ENCODE measurements at regions of chr2 and their contacts with region 1.

Region 1: DNA sequence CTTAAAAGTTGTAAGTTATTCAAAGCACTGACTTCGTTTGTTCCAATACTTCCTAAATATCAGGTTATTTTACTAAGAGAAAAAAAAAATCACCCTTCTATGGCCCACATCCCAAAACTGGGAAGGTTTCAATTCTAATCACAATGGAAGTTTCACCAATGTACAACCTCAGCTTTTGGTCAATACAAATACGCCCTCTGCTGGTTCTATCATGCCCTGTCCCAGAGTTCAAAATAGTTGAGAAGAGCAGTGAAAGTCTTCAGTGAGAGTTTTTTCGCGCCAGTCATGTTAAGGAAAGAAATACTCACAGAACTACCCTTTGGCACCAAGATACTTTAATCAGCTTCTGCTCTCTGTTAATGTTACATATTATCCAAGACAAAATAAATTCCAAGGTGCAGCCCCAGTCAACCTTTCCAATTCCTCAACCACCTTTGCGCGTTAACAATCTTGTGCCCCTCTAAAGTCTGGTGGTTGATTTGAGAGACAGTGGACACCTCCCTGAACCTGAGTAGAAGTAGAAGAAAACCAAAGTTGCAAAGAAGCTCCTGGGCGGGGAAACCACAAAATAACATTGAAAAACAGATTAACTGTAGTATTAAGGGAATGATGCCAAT is 59.9 kb downstream of the SUMO1 start:
- DNase-seq: peak in 13 of 14 experiments; percentile 10 to 73 (median 35)
- ATAC-seq: no peak
- H3K4me3 ChIP-seq: no peak overlapping the region
- H3K4me3 Mint-ChIP-seq: no peak overlapping the region
- H3K27ac ChIP-seq: no peak overlapping the region
- H3K27ac Mint-ChIP-seq: no peak overlapping the region
- H3K4me1 ChIP-seq: no peaks in the 10 kb centered on the region
- H3K4me1 Mint-ChIP-seq: no peaks in the 10 kb centered on the region
- H3K27me3 ChIP-seq: no peaks in the 10 kb centered on the region
- H3K27me3 Mint-ChIP-seq: peaks cover 8% of the 10 kb centered on the region
- CTCF ChIP-seq: peak; percentile 87

Region 2: DNA sequence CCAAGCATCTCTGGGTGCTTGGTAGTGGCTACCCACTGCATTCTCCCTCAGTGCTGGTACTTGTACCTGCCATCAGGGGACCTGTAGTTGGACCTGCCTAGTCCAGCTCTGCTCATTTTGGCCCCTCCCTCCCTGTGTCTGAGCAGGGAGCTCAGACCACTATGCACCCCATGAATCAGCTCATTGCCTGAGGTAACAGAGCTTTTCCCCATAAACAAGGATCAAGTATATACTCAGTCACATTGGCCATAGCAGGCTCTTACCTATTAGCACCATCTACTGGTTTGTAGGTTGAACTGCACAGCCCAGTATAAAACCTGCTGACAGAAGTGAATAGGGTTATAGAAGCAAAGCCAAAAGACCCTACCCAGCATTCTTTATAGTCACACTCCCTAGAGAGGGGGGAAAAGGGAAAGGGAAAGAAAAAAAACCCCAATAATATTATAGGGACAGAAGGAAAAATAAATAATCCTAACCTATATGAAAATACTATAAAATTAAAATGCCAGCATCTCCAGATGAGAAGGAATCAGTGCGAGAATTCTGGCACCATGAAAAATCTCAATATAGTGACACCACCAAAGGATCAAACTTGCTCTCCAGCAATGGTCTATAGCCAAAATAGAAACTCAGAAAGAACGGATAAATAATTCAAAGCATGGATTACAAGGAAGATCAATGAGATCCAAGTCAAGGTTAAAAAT is 814.4 kb before region 1 on chr2:
- CTCF ChIA-PET with region 1: no interaction called
- POLR2A ChIA-PET with region 1: no interaction called
- intact Hi-C with region 1: loop called in 1 of 2 experiments (anchors 2 kb)
- DNase-seq: peak in 7 of 14 experiments; percentile 3 to 75 (median 48)
- ATAC-seq: peak; percentile 97
- H3K4me3 ChIP-seq: no peak overlapping the region
- H3K4me3 Mint-ChIP-seq: no peak overlapping the region
- H3K27ac ChIP-seq: no peak overlapping the region
- H3K27ac Mint-ChIP-seq: peak overlapping the region; percentile 28
- H3K4me1 ChIP-seq: peaks cover 17% of the 10 kb centered on the region
- H3K4me1 Mint-ChIP-seq: peaks cover 36% of the 10 kb centered on the region
- H3K27me3 ChIP-seq: no peaks in the 10 kb centered on the region
- H3K27me3 Mint-ChIP-seq: no peaks in the 10 kb centered on the region
- CTCF ChIP-seq: peak; percentile 95

Region 3: GRCh38 chr2:201680743-201681142 is 497.7 kb before region 1 on chr2:
- CTCF ChIA-PET with region 1: no interaction called
- POLR2A ChIA-PET with region 1: no interaction called
- intact Hi-C with region 1: loop called (anchors 5 kb)
- DNase-seq: peak in 3 of 14 experiments; percentile 12 to 22 (median 18)
- ATAC-seq: no peak
- H3K4me3 ChIP-seq: no peak overlapping the region
- H3K4me3 Mint-ChIP-seq: no peak overlapping the region
- H3K27ac ChIP-seq: no peak overlapping the region
- H3K27ac Mint-ChIP-seq: no peak overlapping the region
- H3K4me1 ChIP-seq: no peaks in the 10 kb centered on the region
- H3K4me1 Mint-ChIP-seq: no peaks in the 10 kb centered on the region
- H3K27me3 ChIP-seq: no peaks in the 10 kb centered on the region
- H3K27me3 Mint-ChIP-seq: peaks cover 15% of the 10 kb centered on the region
- CTCF ChIP-seq: peak; percentile 14

Region 4: GRCh38 chr2:201754717-201755415 is 423.6 kb before region 1 on chr2:
- CTCF ChIA-PET with region 1: no interaction called
- POLR2A ChIA-PET with region 1: no interaction called
- intact Hi-C with region 1: loop called (anchors 1 to 5 kb)
- DNase-seq: no peak
- ATAC-seq: no peak
- H3K4me3 ChIP-seq: no peak overlapping the region
- H3K4me3 Mint-ChIP-seq: no peak overlapping the region
- H3K27ac ChIP-seq: no peak overlapping the region
- H3K27ac Mint-ChIP-seq: no peak overlapping the region
- H3K4me1 ChIP-seq: no peaks in the 10 kb centered on the region
- H3K4me1 Mint-ChIP-seq: no peaks in the 10 kb centered on the region
- H3K27me3 ChIP-seq: no peaks in the 10 kb centered on the region
- H3K27me3 Mint-ChIP-seq: no peaks in the 10 kb centered on the region
- CTCF ChIP-seq: no peak

Region 5: DNA sequence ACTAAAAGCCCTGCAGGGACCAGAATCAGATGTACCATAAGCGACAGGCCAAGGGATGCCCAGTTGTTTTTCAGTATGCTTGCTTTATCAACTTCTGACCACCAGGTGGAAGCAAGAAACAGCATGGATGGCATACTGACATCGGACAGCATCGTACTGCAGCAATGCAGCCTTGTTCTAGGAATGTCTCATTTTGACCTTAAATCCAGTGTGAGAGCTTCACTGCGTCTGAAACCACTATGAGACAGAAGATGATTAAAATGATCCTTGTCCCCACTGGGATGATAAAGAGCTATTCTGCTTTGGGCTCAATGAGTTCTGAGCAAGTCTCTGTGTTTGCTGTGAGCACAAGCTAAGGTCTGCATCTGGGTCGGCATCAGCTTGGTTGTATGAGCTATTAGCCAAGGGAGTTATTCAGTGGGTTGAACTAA is 317.8 kb before region 1 on chr2:
- CTCF ChIA-PET with region 1: interaction called, 13 read pairs
- POLR2A ChIA-PET with region 1: interaction called, 3 read pairs
- intact Hi-C with region 1: loop called (anchors 1 kb)
- DNase-seq: peak in 11 of 14 experiments; percentile 3 to 72 (median 19)
- ATAC-seq: peak; percentile 71
- H3K4me3 ChIP-seq: no peak overlapping the region
- H3K4me3 Mint-ChIP-seq: no peak overlapping the region
- H3K27ac ChIP-seq: no peak overlapping the region
- H3K27ac Mint-ChIP-seq: no peak overlapping the region
- H3K4me1 ChIP-seq: peaks cover 9% of the 10 kb centered on the region
- H3K4me1 Mint-ChIP-seq: peaks cover 20% of the 10 kb centered on the region
- H3K27me3 ChIP-seq: peaks cover 0 to 7% of the 10 kb centered on the region in 2 experiments
- H3K27me3 Mint-ChIP-seq: peaks cover 42% of the 10 kb centered on the region
- CTCF ChIP-seq: peak; percentile 75

Measured in CD4-positive, alpha-beta T cell (primary cell).